Posterior cingulate gyrus (tissue), 11 donors: ENCODE measurements at regions of chr2 and their contacts with region 1.

Region 1: DNA sequence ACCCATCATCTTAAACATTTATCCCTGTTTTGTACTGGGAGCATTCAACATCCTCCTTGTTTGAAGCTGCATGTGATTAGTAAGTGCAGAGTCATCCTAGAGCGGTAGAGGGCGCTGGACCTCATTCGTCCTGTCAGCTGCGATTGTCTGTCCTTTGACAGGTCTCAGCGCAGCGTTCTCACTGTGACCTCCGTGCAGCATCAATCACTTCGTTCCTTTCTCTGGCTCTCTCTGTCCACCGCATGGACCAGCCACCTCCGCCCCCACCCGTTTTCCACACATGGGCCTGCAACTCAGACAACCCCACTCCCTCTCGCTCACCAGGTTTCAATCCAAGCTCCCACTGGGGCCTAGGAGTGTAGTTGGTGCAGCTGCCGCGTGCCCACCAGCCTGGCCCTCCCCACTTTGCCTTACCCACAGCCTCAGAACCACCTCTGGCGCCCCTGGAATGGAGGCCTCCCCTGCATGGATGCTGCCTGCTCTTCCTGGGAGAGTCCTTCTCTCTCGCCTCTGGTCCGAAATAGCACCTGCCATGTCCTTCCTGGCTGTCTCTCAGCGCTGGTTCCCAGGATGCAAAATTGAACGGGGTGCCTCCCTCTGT is 90.5 kb downstream of the NDUFA10 start:
- DNase-seq: peak; percentile 52 to 96 (median 82)

Region 2: DNA sequence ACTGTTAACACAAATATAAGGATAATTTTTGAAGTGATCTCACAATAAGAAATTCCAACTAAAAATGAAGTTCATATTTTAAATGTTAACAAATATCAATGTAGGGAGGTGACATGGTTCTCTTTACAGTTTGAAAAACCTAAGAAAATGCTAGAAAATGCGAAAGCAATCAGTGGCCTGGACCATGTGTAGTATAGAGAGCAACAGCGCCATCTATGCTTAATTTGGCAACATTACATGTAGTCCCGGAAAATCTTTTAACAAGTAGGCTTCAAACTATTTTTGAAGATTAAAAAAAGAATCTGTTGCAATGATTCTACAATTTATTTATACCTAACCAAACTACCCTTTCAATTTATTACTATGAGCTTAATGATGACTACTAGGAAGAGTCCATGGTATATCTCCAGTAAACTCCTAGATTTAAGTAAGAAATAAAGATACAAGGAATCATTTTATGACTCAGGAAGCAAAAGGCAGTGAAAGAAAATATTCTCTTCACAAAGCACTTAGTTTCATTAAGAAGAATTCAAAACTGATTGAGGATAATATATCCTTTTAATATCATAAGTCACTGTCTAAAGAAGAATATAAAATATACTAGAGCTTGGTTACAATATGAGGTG is 57.1 kb after region 1 on chr2:
- intact Hi-C with region 1: loop called (anchors 2 kb)
- DNase-seq: no peak